Activated CD8-positive, alpha-beta memory T cell treated with anti-CD3 and anti-CD28 coated beads, Interleukin-2, amount 10 ng/mL, durations not matched to agents 7 days and 5 days (primary cell): ENCODE measurements at regions of chr3 and their contacts with region 1.

Region 1: DNA sequence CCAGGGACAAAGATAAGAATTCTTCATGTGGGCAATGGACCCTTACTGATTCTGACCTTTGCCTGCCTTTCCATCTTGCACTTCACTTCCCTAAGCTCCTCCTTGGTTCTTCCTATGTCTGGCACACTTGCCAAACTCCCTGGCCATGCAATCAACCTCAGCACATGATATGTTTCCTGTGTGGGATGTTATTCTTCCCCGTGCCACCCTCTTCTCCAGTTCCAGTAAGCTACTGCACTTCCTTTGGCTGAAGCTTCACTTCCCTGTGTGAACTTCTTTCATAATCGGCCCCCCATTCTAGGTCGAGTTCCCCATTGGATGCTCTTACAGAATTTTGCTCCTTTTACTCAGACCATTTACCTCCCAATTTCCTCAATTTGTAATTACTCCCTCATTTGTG is 10.7 kb upstream of the TASOR start:
- DNase-seq: no peak
- ATAC-seq: peak; percentile 17
- H3K4me3 Mint-ChIP-seq: peak overlapping the region; percentile 70
- H3K27ac Mint-ChIP-seq: peak overlapping the region; percentile 93
- H3K4me1 Mint-ChIP-seq: peaks cover 43% of the 10 kb centered on the region
- H3K27me3 Mint-ChIP-seq: no peaks in the 10 kb centered on the region

Region 2: DNA sequence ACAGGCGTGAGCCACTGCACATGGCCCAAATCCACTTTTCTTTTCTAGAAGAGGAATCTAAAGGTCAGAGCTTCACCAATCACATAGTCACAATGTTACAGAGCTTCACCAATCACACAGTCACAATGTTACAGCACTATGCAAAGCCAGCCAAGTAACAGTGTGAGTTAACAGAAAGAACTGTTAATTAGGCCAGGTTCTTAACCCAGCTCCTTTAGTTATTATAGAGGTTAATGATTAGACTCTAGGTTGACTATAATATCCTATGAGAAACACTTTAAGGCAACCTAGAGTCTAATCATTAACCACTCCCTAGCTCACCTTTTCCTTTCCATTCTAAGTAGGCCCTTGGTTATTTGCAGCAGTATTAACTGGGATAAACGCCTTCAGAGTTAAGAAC is 64.7 kb before region 1 on chr3:
- CTCF ChIA-PET with region 1: no interaction called
- DNase-seq: no peak
- ATAC-seq: no peak
- H3K4me3 Mint-ChIP-seq: no peak overlapping the region
- H3K27ac Mint-ChIP-seq: no peak overlapping the region
- H3K4me1 Mint-ChIP-seq: peaks cover 9% of the 10 kb centered on the region
- H3K27me3 Mint-ChIP-seq: no peaks in the 10 kb centered on the region

Region 3: DNA sequence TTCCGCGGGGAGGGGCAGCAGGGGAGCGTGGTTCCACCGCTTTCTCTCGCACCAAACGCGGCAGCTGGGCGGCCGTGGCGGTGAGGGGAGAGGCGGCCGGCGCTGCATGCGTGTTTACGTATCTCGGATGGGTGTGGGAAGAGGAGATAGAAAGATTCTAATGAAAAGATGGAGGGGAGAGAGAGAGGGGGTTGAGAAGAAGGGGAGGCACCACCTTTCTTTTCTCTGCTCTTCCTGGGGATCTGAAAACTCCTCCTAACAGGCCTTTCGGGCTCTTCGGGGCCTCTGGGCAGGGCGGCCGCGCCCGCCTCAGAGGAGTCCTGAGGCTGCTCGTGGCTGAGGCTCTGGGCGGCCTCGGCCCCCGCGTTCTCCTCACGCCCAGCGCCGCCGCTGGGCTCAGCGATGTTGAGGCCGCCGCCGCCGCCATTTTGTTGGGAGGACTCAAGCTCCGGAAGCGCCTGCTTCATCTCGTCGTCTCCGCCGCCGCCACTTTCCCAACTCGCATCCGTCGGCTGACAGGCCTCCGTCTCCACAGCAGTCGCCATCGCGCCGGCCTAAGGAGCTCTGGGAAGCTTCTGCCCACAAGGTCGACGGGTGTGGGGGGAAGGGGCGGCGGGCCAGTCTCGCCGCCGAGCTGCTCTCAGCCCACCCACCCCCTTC is 11.2 kb before region 1 on chr3:
- CTCF ChIA-PET with region 1: interaction called, 11 read pairs
- DNase-seq: peak; percentile 84
- ATAC-seq: peak; percentile 83
- H3K4me3 Mint-ChIP-seq: peak overlapping the region; percentile 85
- H3K27ac Mint-ChIP-seq: peak overlapping the region; percentile 92
- H3K4me1 Mint-ChIP-seq: peaks cover 39% of the 10 kb centered on the region
- H3K27me3 Mint-ChIP-seq: no peaks in the 10 kb centered on the region